Heart left ventricle (tissue), 16 donors: ENCODE measurements at regions of chr5 and their contacts with region 1.

Region 1: GRCh38 chr5:141564216-141564692 is 54.5 kb downstream of the DIAPH1 start:
- DNase-seq: peak in 3 of 5 donors; percentile 51 to 75 (median 72)
- ATAC-seq: peak; percentile 50 to 70 (median 59)
- H3K4me3 ChIP-seq: no peak overlapping the region
- H3K27ac ChIP-seq: peak overlapping the region in 11 of 12 donors; percentile 37 to 75 (median 61)
- H3K4me1 ChIP-seq: peaks cover 3 to 35% (median 23%) of the 10 kb centered on the region in 12 donors
- H3K27me3 ChIP-seq: no peaks in the 10 kb centered on the region
- CTCF ChIP-seq: peak; percentile 93 to 99 (median 96)
- POLR2A ChIP-seq: no peak

Region 2: GRCh38 chr5:141100240-141100805 is 463.9 kb before region 1 on chr5 and contains the start of gene PCDHB3:
- intact Hi-C with region 1: loop called in 4 of 10 experiments (anchors 5 to 10 kb)
- DNase-seq: peak in 4 of 5 donors; percentile 20 to 71 (median 62)
- ATAC-seq: peak in 3 of 4 donors; percentile 55 to 72 (median 65)
- H3K4me3 ChIP-seq: peak within 1 kb of the TSS in 11 of 12 donors; percentile 0 to 59 (median 41)
- H3K27ac ChIP-seq: peak within 1 kb of the TSS in 3 of 12 donors; percentile 35 to 54 (median 37)
- H3K4me1 ChIP-seq: no peaks in the 10 kb centered on the region
- H3K27me3 ChIP-seq: peaks cover 0 to 36% (median 10%) of the 10 kb centered on the region in 9 donors
- CTCF ChIP-seq: peak; percentile 8 to 58 (median 44)
- POLR2A ChIP-seq: no peak
- total RNA-seq, gene PCDHB3: 0.77 to 2.9 (median 1.1) TPM

Region 3: GRCh38 chr5:141208478-141208877 is 355.8 kb before region 1 on chr5 and contains the start of gene PCDHB12:
- intact Hi-C with region 1: loop called in 2 of 10 experiments (anchors 5 to 10 kb)
- DNase-seq: no peak
- ATAC-seq: peak in 1 of 4 donors; percentile 26
- H3K4me3 ChIP-seq: peak within 1 kb of the TSS in 7 of 12 donors; percentile 6 to 42 (median 26)
- H3K27ac ChIP-seq: no peak within 1 kb of the TSS
- H3K4me1 ChIP-seq: no peaks in the 10 kb centered on the region
- H3K27me3 ChIP-seq: peaks cover 0 to 18% (median 3%) of the 10 kb centered on the region in 9 donors
- CTCF ChIP-seq: peak in 10 of 12 donors; percentile 11 to 43 (median 30)
- POLR2A ChIP-seq: no peak
- total RNA-seq, gene PCDHB12: 0.37 to 2.4 (median 1.2) TPM

Region 4: GRCh38 chr5:141245250-141245717 is 319.0 kb before region 1 on chr5 and contains the start of gene PCDHB15:
- intact Hi-C with region 1: loop called in 7 of 10 experiments (anchors 2 to 10 kb)
- DNase-seq: peak in 2 of 5 donors; percentile 19 to 30
- ATAC-seq: peak; percentile 26 to 60 (median 32)
- H3K4me3 ChIP-seq: peak within 1 kb of the TSS in 11 of 12 donors; percentile 23 to 60 (median 50)
- H3K27ac ChIP-seq: peak within 1 kb of the TSS in 2 of 12 donors; percentile 18 to 62
- H3K4me1 ChIP-seq: peaks cover 0 to 2% (median 0%) of the 10 kb centered on the region in 12 donors
- H3K27me3 ChIP-seq: peaks cover 0 to 19% (median 4%) of the 10 kb centered on the region in 9 donors
- CTCF ChIP-seq: peak in 11 of 12 donors; percentile 18 to 58 (median 45)
- POLR2A ChIP-seq: no peak
- total RNA-seq, gene PCDHB15: 3.7 to 7.5 (median 4.5) TPM

Region 5: DNA sequence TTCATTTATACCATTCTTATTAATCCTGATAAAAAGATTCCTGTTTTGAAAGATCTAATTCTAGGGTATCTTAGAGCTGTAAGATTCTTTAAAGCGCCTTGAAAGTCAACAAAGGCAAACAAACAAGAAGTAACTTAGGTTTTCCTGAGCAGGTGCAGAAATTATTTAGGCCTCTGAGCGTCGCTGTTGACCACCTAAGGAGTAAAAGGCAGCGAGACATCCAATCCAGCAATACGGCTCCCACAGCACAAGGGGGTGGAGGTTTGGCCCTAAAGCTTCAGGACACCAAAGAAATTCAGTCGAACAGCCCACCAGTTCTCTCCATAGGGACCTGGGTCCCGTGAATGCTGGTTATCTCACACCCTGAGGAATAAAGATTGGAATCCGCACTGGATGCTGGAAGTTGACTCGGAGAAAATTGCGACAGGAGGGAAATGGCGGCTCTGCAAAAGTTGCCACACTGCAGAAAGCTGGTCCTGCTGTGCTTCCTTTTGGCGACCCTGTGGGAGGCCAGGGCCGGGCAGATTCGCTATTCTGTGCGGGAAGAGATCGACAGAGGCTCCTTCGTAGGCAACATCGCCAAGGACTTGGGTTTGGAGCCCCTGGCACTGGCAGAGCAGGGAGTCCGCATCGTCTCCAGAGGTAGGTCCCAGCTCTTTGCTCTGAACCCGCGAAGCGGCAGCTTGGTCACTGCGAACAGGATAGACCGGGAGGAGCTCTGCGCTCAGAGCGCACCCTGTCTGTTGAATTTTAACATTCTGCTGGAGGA is 225.5 kb before region 1 on chr5 and contains the start of gene PCDHGA2:
- intact Hi-C with region 1: loop called in 6 of 10 experiments (anchors 2 to 5 kb)
- DNase-seq: peak in 2 of 5 donors; percentile 52 to 54
- ATAC-seq: peak; percentile 66 to 70 (median 69)
- H3K4me3 ChIP-seq: peak within 1 kb of the TSS; percentile 3 to 61 (median 51)
- H3K27ac ChIP-seq: peak within 1 kb of the TSS; percentile 21 to 82 (median 75)
- H3K4me1 ChIP-seq: peaks cover 0 to 7% (median 0%) of the 10 kb centered on the region in 12 donors
- H3K27me3 ChIP-seq: peaks cover 0 to 34% (median 0%) of the 10 kb centered on the region in 9 donors
- CTCF ChIP-seq: peak; percentile 30 to 73 (median 53)
- POLR2A ChIP-seq: no peak
- total RNA-seq, gene PCDHGA2: 5.8 to 15.1 (median 10.7) TPM

Region 6: DNA sequence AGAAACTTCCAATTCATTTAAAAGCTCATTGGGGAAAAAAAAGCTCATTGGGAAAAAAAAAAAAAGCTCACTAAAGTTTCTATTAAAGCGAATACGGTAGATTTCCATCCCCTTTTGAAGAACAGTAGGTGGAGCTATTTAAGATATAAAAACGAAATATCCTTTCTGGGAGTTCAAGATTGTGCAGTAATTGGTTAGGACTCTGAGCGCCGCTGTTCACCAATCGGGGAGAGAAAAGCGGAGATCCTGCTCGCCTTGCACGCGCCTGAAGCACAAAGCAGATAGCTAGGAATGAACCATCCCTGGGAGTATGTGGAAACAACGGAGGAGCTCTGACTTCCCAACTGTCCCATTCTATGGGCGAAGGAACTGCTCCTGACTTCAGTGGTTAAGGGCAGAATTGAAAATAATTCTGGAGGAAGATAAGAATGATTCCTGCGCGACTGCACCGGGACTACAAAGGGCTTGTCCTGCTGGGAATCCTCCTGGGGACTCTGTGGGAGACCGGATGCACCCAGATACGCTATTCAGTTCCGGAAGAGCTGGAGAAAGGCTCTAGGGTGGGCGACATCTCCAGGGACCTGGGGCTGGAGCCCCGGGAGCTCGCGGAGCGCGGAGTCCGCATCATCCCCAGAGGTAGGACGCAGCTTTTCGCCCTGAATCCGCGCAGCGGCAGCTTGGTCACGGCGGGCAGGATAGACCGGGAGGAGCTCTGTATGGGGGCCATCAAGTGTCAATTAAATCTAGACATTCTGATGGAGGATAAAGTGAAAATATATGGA is 133.7 kb before region 1 on chr5 and contains the start of gene PCDHGA12:
- intact Hi-C with region 1: loop called in 4 of 10 experiments (anchors 5 to 10 kb)
- DNase-seq: peak in 4 of 5 donors; percentile 56 to 77 (median 65)
- ATAC-seq: peak; percentile 67 to 94 (median 86)
- H3K4me3 ChIP-seq: peak within 1 kb of the TSS in 11 of 12 donors; percentile 19 to 58 (median 42)
- H3K27ac ChIP-seq: peak within 1 kb of the TSS in 8 of 12 donors; percentile 10 to 67 (median 40)
- H3K4me1 ChIP-seq: peaks cover 0 to 16% (median 0%) of the 10 kb centered on the region in 12 donors
- H3K27me3 ChIP-seq: peaks cover 0 to 52% (median 0%) of the 10 kb centered on the region in 9 donors
- CTCF ChIP-seq: peak; percentile 34 to 73 (median 55)
- POLR2A ChIP-seq: no peak
- total RNA-seq, gene PCDHGA12: 3.2 to 15.5 (median 7.3) TPM

Region 7: DNA sequence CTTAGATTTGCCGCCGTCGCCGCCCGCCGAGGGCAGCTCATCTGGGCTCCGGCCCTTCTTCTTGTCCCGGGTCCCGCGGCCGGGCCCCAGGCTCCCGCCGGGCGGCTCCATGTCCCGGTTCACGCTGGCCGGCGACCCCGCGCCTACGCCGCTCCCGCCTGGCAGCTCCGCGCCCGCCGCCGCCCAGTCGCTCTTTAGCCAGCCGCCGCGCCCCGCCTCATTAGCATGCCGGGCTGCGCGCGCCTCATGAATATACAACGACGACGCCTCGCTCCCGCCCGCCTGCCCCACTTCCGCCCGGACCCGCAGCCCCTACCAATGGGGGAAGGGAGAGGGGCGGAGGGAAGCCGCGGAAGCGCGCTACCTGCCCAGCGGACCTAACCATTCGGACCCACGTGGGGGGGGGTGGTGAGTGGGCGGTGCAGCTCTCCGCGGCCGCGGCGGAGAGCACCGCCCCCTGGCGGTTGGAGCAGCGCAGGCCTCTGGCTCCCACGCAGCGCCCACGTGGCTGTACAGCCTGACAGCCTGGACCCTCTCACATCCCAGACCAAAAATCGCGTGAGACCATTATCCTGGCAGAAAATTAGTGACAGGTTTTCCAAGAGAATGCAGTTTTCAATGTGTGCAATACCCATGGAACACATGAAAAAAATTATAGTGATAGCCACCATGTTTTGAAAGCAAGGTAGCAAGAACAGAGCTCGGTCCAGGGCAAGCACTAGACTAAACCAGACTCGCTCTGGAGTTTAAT is 54.7 kb after region 1 on chr5 and contains the start of gene DIAPH1:
- intact Hi-C with region 1: no loop called
- DNase-seq: peak; percentile 97 to 98 (median 98)
- ATAC-seq: peak; percentile 95 to 98 (median 96)
- H3K4me3 ChIP-seq: peak within 1 kb of the TSS; percentile 73 to 99 (median 96)
- H3K27ac ChIP-seq: peak within 1 kb of the TSS; percentile 75 to 99 (median 96)
- H3K4me1 ChIP-seq: peaks cover 0 to 64% (median 26%) of the 10 kb centered on the region in 12 donors
- H3K27me3 ChIP-seq: no peaks in the 10 kb centered on the region
- CTCF ChIP-seq: peak; percentile 95 to 99 (median 98)
- POLR2A ChIP-seq: peak; percentile 87 to 98
- total RNA-seq, gene DIAPH1: 38.8 to 137 (median 61.5) TPM